Heart left ventricle (tissue), 16 donors: ENCODE measurements at regions of chr13 and their contacts with region 1.

Region 1: GRCh38 chr13:76552041-76552772 is 334.0 kb downstream of the KCTD12 start:
- DNase-seq: no peak
- ATAC-seq: no peak
- H3K4me3 ChIP-seq: no peak overlapping the region
- H3K27ac ChIP-seq: no peak overlapping the region
- H3K4me1 ChIP-seq: peaks cover 0 to 8% (median 0%) of the 10 kb centered on the region in 12 donors
- H3K27me3 ChIP-seq: no peaks in the 10 kb centered on the region
- CTCF ChIP-seq: no peak
- POLR2A ChIP-seq: no peak

Region 2: GRCh38 chr13:76516013-76516412 is 36.2 kb before region 1 on chr13:
- intact Hi-C with region 1: loop called in 1 of 10 experiments (anchors 2 kb)
- DNase-seq: no peak
- ATAC-seq: no peak
- H3K4me3 ChIP-seq: no peak overlapping the region
- H3K27ac ChIP-seq: no peak overlapping the region
- H3K4me1 ChIP-seq: peaks cover 0 to 5% (median 0%) of the 10 kb centered on the region in 12 donors
- H3K27me3 ChIP-seq: no peaks in the 10 kb centered on the region
- CTCF ChIP-seq: no peak
- POLR2A ChIP-seq: no peak

Region 3: DNA sequence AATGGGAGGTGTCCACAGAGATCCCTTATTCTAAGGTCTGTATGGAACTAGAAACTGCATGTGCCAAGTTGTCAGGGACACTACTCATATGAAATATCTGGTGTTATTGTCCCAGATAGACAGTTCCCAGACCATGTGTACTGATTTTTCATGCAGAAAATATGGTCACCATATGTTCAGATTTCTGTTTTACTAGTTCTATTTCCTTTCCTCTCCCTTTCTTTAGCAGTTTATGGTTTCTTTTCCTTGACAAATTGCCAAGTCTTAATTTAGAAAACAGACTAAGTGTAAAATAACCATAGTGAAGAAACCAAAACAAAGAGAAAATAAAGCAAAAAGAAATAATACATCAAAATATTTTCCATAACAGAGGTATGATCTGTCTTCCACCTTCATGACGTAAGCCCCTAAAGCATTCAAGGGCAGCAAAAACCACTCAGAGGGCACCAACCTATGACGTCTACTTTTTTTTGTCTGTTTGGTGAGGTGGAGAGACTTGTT is 85.5 kb after region 1 on chr13:
- intact Hi-C with region 1: no loop called
- DNase-seq: no peak
- ATAC-seq: no peak
- H3K4me3 ChIP-seq: no peak overlapping the region
- H3K27ac ChIP-seq: peak overlapping the region in 6 of 12 donors; percentile 22 to 55 (median 42)
- H3K4me1 ChIP-seq: peaks cover 0 to 31% (median 11%) of the 10 kb centered on the region in 12 donors
- H3K27me3 ChIP-seq: no peaks in the 10 kb centered on the region
- CTCF ChIP-seq: no peak
- POLR2A ChIP-seq: no peak